Right ventricle myocardium inferior (tissue), 1 donor: ENCODE measurements at regions of chr10 and their contacts with region 1.

Region 1: GRCh38 chr10:48231699-48232315 is 42.7 kb downstream of the FRMPD2 start:
- DNase-seq: no peak
- ATAC-seq: no peak

Region 2: GRCh38 chr10:48205918-48206317 is 25.9 kb before region 1 on chr10:
- intact Hi-C with region 1: loop called (anchors 2 kb)
- DNase-seq: no peak
- ATAC-seq: no peak

Region 3: GRCh38 chr10:48639632-48640031 is 407.8 kb after region 1 on chr10:
- intact Hi-C with region 1: no loop called
- DNase-seq: no peak
- ATAC-seq: no peak